Natural killer cell (primary cell): ENCODE measurements at regions of chr10 and their contacts with region 1.

Region 1: GRCh38 chr10:90592638-90593302 is 265.1 kb downstream of the HTR7 start:
- DNase-seq: peak in 1 of 2 donors; percentile 2
- ATAC-seq: no peak
- H3K4me3 ChIP-seq: no peak overlapping the region
- H3K4me3 Mint-ChIP-seq: no peak overlapping the region
- H3K27ac ChIP-seq: no peak overlapping the region
- H3K27ac Mint-ChIP-seq: no peak overlapping the region
- H3K4me1 ChIP-seq: no peaks in the 10 kb centered on the region
- H3K4me1 Mint-ChIP-seq: no peaks in the 10 kb centered on the region
- H3K27me3 ChIP-seq: no peaks in the 10 kb centered on the region
- H3K27me3 Mint-ChIP-seq: no peaks in the 10 kb centered on the region
- CTCF ChIP-seq: no peak

Region 2: GRCh38 chr10:90193240-90193985 is 399.4 kb before region 1 on chr10:
- intact Hi-C with region 1: no loop called
- DNase-seq: no peak
- ATAC-seq: no peak
- H3K4me3 ChIP-seq: no peak overlapping the region
- H3K4me3 Mint-ChIP-seq: no peak overlapping the region
- H3K27ac ChIP-seq: no peak overlapping the region
- H3K27ac Mint-ChIP-seq: no peak overlapping the region
- H3K4me1 ChIP-seq: no peaks in the 10 kb centered on the region
- H3K4me1 Mint-ChIP-seq: no peaks in the 10 kb centered on the region
- H3K27me3 ChIP-seq: no peaks in the 10 kb centered on the region
- H3K27me3 Mint-ChIP-seq: no peaks in the 10 kb centered on the region
- CTCF ChIP-seq: no peak

Region 3: GRCh38 chr10:90652519-90652918 is 59.7 kb after region 1 on chr10:
- intact Hi-C with region 1: loop called (anchors 10 kb)
- DNase-seq: no peak
- ATAC-seq: no peak
- H3K4me3 ChIP-seq: no peak overlapping the region
- H3K4me3 Mint-ChIP-seq: no peak overlapping the region
- H3K27ac ChIP-seq: no peak overlapping the region
- H3K27ac Mint-ChIP-seq: no peak overlapping the region
- H3K4me1 ChIP-seq: no peaks in the 10 kb centered on the region
- H3K4me1 Mint-ChIP-seq: no peaks in the 10 kb centered on the region
- H3K27me3 ChIP-seq: no peaks in the 10 kb centered on the region
- H3K27me3 Mint-ChIP-seq: no peaks in the 10 kb centered on the region
- CTCF ChIP-seq: no peak